ENCODE measurements at regions of chr18 and their contacts with region 1.

Region 1: GRCh38 chr18:60549338-60549960 is 176.9 kb upstream of the MC4R start:
- DNase-seq: peak; percentile 4 to 46 (median 45)
- H3K4me3 ChIP-seq: no peak overlapping the region
- H3K4me3 Mint-ChIP-seq: no peak overlapping the region
- H3K27ac ChIP-seq: no peak overlapping the region
- H3K27ac Mint-ChIP-seq: no peak overlapping the region
- H3K4me1 ChIP-seq: no peaks in the 10 kb centered on the region
- H3K4me1 Mint-ChIP-seq: no peaks in the 10 kb centered on the region
- H3K27me3 ChIP-seq: no peaks in the 10 kb centered on the region
- H3K27me3 Mint-ChIP-seq: no peaks in the 10 kb centered on the region
- CTCF ChIP-seq: peak; percentile 86

Region 2: DNA sequence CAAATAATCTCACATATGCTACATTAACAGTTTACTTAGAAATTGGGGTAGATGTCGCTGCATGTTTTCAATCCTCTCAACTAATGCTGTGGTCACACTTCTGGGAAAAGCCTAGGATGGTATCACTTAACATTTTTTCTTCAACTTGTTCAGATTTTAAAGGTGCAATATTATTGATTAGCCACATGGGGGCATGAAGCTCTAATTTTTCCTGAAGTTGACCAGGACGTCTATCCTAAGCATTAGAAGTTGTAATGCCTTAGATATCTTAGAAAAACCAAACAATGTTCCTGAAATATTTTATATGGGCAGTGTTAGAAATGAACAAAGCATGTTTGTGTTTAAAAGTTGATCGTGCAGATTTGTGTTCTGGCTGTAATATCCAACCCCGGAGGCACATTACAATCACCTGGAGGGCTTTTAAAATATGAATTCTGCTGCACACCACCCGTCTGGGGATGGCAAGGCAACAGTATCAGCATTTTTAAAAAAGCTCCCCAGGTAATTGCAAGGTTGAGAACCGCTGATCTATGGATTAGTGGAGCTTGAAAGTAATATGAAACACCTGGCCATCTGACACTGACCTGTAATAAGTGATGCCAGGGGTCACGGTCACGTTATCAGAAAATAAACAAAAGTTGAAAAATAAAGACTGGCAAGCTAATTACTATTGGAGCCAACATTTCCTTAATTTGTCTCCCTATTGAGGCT is 1089.9 kb before region 1 on chr18:
- intact Hi-C with region 1: loop called (anchors 5 to 10 kb)
- DNase-seq: no peak
- H3K4me3 ChIP-seq: no peak overlapping the region
- H3K4me3 Mint-ChIP-seq: no peak overlapping the region
- H3K27ac ChIP-seq: no peak overlapping the region
- H3K27ac Mint-ChIP-seq: no peak overlapping the region
- H3K4me1 ChIP-seq: no peaks in the 10 kb centered on the region
- H3K4me1 Mint-ChIP-seq: no peaks in the 10 kb centered on the region
- H3K27me3 ChIP-seq: no peaks in the 10 kb centered on the region
- H3K27me3 Mint-ChIP-seq: peaks cover 2 to 6% (median 2%) of the 10 kb centered on the region in 3 donors
- CTCF ChIP-seq: peak; percentile 54

Region 3: DNA sequence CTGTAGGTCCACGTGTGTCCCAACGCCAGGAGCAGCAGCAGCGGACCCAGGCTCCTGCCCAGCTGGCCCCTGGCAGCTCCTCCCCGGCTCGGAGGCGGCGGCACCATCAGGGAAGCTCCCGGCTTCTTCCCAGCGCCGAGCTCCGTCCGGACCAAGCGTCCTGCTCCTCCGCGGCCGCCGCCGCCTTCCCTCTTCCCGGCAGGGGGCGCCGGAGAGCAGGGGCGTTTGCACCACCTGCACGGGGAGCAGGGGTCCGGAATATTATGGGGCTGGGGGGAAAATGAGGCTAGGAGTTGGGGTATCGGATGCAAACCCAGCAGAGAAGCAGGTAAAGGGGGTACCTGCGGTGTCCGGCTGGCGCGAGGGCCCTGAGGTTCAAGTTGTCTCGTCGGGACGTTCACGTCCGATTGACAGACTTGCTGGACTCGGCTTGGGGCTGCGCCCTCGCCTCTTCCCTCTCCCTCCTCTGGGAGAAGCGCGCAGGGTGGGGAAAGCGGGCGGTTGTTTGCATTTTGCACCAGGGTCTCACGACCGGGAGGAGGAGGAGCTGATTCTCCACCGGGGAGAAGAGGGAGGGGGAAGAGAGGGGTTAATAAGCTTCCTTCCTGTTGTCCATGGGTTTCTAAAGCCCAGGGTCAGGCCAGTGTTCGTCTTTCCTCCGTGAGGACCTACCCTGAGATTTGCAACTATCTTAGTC is 852.1 kb before region 1 on chr18 and contains the start of gene CCBE1:
- intact Hi-C with region 1: loop called in 1 of 2 experiments (anchors 5 kb)
- DNase-seq: no peak
- H3K4me3 ChIP-seq: peak within 1 kb of the TSS in 1 of 3 experiments; percentile 38
- H3K4me3 Mint-ChIP-seq: peak within 1 kb of the TSS; percentile 57 to 81
- H3K27ac ChIP-seq: no peak within 1 kb of the TSS
- H3K27ac Mint-ChIP-seq: peak within 1 kb of the TSS in 1 of 7 donors; percentile 18
- H3K4me1 ChIP-seq: peaks cover 0 to 8% of the 10 kb centered on the region in 2 donors
- H3K4me1 Mint-ChIP-seq: peaks cover 13% of the 10 kb centered on the region
- H3K27me3 ChIP-seq: peaks cover 37 to 65% of the 10 kb centered on the region in 2 donors
- H3K27me3 Mint-ChIP-seq: peaks cover 53 to 64% (median 61%) of the 10 kb centered on the region in 3 donors
- CTCF ChIP-seq: peak; percentile 71
- polyA plus RNA-seq, gene CCBE1: not detected

Region 4: DNA sequence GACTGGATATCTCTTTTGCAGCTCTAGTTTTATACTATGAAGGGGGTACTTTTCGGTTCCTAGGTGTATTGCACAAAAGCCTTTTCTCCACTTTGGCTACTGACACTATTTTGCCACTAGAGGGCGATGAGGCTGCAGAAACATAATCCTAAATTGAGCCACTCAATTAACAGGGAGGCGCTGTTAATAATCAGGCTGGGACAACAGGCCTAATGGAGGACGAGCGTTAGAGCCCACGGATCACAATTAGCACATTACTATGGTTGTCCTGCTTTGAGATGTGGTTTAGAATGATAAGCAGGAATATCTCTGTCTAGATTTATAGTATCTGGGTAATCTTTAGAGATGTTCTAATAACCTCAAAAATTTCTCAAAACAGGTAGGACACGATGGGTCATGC is 711.9 kb before region 1 on chr18:
- intact Hi-C with region 1: loop called in 1 of 2 experiments (anchors 10 kb)
- DNase-seq: peak; percentile 61 to 75 (median 74)
- H3K4me3 ChIP-seq: no peak overlapping the region
- H3K4me3 Mint-ChIP-seq: no peak overlapping the region
- H3K27ac ChIP-seq: no peak overlapping the region
- H3K27ac Mint-ChIP-seq: peak overlapping the region in 1 of 7 donors; percentile 30
- H3K4me1 ChIP-seq: peaks cover 0 to 2% of the 10 kb centered on the region in 2 donors
- H3K4me1 Mint-ChIP-seq: peaks cover 3% of the 10 kb centered on the region
- H3K27me3 ChIP-seq: no peaks in the 10 kb centered on the region
- H3K27me3 Mint-ChIP-seq: peaks cover 0 to 1% (median 1%) of the 10 kb centered on the region in 3 donors
- CTCF ChIP-seq: peak; percentile 81

Measured in CD14-positive monocyte (primary cell).